Spleen (tissue), 13 donors: ENCODE measurements at regions of chr4 and their contacts with region 1.

Region 1: GRCh38 chr4:20684852-20685763 is 15.2 kb upstream of the PACRGL start:
- DNase-seq: no peak
- H3K4me3 ChIP-seq: no peak overlapping the region
- H3K27ac ChIP-seq: no peak overlapping the region
- H3K4me1 ChIP-seq: peaks cover 0 to 8% (median 0%) of the 10 kb centered on the region in 6 donors
- H3K27me3 ChIP-seq: no peaks in the 10 kb centered on the region
- CTCF ChIP-seq: peak in 9 of 11 experiments; percentile 18 to 64 (median 53)
- POLR2A ChIP-seq: no peak

Region 2: GRCh38 chr4:18689308-18690115 is 1995.6 kb before region 1 on chr4:
- intact Hi-C with region 1: loop called (anchors 5 kb)
- DNase-seq: no peak
- H3K4me3 ChIP-seq: no peak overlapping the region
- H3K27ac ChIP-seq: no peak overlapping the region
- H3K4me1 ChIP-seq: no peaks in the 10 kb centered on the region
- H3K27me3 ChIP-seq: no peaks in the 10 kb centered on the region
- CTCF ChIP-seq: peak; percentile 44 to 82 (median 67)
- POLR2A ChIP-seq: no peak

Region 3: GRCh38 chr4:20422398-20422797 is 262.7 kb before region 1 on chr4:
- intact Hi-C with region 1: loop called (anchors 10 kb)
- DNase-seq: no peak
- H3K4me3 ChIP-seq: no peak overlapping the region
- H3K27ac ChIP-seq: no peak overlapping the region
- H3K4me1 ChIP-seq: peaks cover 0 to 20% (median 8%) of the 10 kb centered on the region in 6 donors
- H3K27me3 ChIP-seq: no peaks in the 10 kb centered on the region
- CTCF ChIP-seq: peak in 7 of 11 experiments; percentile 12 to 37 (median 35)
- POLR2A ChIP-seq: no peak

Region 4: DNA sequence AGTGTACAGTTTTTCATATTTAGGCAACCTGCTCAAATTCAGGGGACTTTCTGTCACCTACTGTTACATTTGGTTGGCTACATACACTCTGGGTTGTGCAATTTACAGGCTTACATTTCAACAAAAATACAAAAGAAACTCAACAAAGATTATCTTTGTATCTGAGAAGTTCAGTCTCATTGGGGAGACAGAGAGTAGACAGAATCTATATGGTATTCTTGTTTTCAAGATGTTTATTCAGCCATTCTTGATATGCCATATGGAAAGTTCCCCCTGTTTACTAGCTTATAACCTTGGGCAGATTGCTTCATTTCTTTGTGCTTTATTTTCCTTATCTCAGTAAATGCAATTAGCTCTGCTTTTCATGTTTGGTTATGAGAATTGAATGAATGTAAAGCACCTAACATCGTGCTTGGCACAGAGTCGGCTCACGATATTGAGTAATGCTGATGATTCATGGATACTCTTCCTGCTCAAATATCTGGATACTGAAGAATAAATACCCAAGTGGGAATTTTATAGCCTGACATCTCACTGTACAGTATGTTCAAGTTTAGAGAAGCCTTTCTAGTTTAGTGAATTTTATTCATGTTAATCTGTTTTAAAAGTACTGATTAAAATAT is 81.3 kb before region 1 on chr4:
- intact Hi-C with region 1: no loop called
- DNase-seq: no peak
- H3K4me3 ChIP-seq: no peak overlapping the region
- H3K27ac ChIP-seq: no peak overlapping the region
- H3K4me1 ChIP-seq: no peaks in the 10 kb centered on the region
- H3K27me3 ChIP-seq: no peaks in the 10 kb centered on the region
- CTCF ChIP-seq: no peak
- POLR2A ChIP-seq: no peak